ENCODE measurements at regions of chr9 and their contacts with region 1.

Region 1: GRCh38 chr9:90142580-90142979 is 500.0 kb downstream of the DIRAS2 start:
- DNase-seq: peak in 1 of 2 experiments; percentile 71
- H3K4me3 ChIP-seq: no peak overlapping the region
- H3K27ac ChIP-seq: no peak overlapping the region
- H3K4me1 ChIP-seq: no peaks in the 10 kb centered on the region; a peak in 1 of 7 replicates
- H3K27me3 ChIP-seq: no peaks in the 10 kb centered on the region
- CTCF ChIP-seq: peak in 2 of 3 experiments; percentile 31 to 40; a peak in 2 of 4 replicates
- EP300 ChIP-seq: no peak
- POLR2A ChIP-seq: no peak
- RAD21 ChIP-seq: peak; percentile 59 to 63

Region 2: GRCh38 chr9:90121762-90122161 is 20.8 kb before region 1 on chr9:
- CTCF ChIA-PET with region 1: interaction called, 12 read pairs
- POLR2A ChIA-PET with region 1: no interaction called
- DNase-seq: no peak
- H3K4me3 ChIP-seq: no peak overlapping the region
- H3K27ac ChIP-seq: no peak overlapping the region
- H3K4me1 ChIP-seq: no peaks in the 10 kb centered on the region
- H3K27me3 ChIP-seq: no peaks in the 10 kb centered on the region
- CTCF ChIP-seq: no peak
- EP300 ChIP-seq: no peak
- POLR2A ChIP-seq: no peak
- RAD21 ChIP-seq: no peak

Region 3: GRCh38 chr9:90127923-90128322 is 14.7 kb before region 1 on chr9:
- CTCF ChIA-PET with region 1: interaction called, 27 read pairs
- POLR2A ChIA-PET with region 1: no interaction called
- DNase-seq: no peak
- H3K4me3 ChIP-seq: no peak overlapping the region
- H3K27ac ChIP-seq: no peak overlapping the region
- H3K4me1 ChIP-seq: no peaks in the 10 kb centered on the region
- H3K27me3 ChIP-seq: no peaks in the 10 kb centered on the region
- CTCF ChIP-seq: no peak
- EP300 ChIP-seq: no peak
- POLR2A ChIP-seq: no peak
- RAD21 ChIP-seq: no peak

Region 4: DNA sequence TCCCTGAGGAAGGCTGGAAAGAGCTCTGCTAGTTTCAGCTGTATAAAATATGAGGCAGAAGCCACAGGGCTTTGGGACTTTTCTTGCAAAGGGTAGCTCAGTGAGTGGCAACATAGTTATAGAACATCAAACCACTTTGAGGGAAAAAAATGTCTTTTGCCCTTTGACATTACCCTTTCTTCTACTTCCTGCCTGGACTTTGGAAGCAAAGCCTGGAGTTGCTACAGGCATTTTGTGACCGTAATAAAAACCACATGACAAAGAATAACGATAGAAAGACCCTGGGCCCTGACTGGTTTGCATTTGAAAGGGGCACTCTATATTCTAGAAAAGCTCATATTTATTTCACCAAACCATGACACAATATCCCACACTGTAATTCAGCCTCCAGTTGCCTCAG is 59.2 kb after region 1 on chr9:
- CTCF ChIA-PET with region 1: interaction called, 31 read pairs
- POLR2A ChIA-PET with region 1: no interaction called
- DNase-seq: no peak
- H3K4me3 ChIP-seq: no peak overlapping the region
- H3K27ac ChIP-seq: no peak overlapping the region
- H3K4me1 ChIP-seq: no peaks in the 10 kb centered on the region
- H3K27me3 ChIP-seq: no peaks in the 10 kb centered on the region
- CTCF ChIP-seq: no peak
- EP300 ChIP-seq: no peak
- POLR2A ChIP-seq: no peak
- RAD21 ChIP-seq: no peak

Region 5: GRCh38 chr9:90219548-90220118 is 77.1 kb after region 1 on chr9:
- CTCF ChIA-PET with region 1: interaction called, 27 read pairs
- POLR2A ChIA-PET with region 1: no interaction called
- DNase-seq: peak; percentile 5 to 83
- H3K4me3 ChIP-seq: peak overlapping the region; percentile 30 to 58 (median 40); a peak in 7 of 8 replicates
- H3K27ac ChIP-seq: no peak overlapping the region
- H3K4me1 ChIP-seq: no peaks in the 10 kb centered on the region; a peak in 1 of 7 replicates
- H3K27me3 ChIP-seq: no peaks in the 10 kb centered on the region
- CTCF ChIP-seq: peak; percentile 62 to 87 (median 83)
- EP300 ChIP-seq: no peak
- POLR2A ChIP-seq: no peak
- RAD21 ChIP-seq: peak; percentile 82 to 87

Measured in H1 (cell line).